GM12878 (cell line): ENCODE measurements at regions of chr1 and their contacts with region 1.

Region 1: DNA sequence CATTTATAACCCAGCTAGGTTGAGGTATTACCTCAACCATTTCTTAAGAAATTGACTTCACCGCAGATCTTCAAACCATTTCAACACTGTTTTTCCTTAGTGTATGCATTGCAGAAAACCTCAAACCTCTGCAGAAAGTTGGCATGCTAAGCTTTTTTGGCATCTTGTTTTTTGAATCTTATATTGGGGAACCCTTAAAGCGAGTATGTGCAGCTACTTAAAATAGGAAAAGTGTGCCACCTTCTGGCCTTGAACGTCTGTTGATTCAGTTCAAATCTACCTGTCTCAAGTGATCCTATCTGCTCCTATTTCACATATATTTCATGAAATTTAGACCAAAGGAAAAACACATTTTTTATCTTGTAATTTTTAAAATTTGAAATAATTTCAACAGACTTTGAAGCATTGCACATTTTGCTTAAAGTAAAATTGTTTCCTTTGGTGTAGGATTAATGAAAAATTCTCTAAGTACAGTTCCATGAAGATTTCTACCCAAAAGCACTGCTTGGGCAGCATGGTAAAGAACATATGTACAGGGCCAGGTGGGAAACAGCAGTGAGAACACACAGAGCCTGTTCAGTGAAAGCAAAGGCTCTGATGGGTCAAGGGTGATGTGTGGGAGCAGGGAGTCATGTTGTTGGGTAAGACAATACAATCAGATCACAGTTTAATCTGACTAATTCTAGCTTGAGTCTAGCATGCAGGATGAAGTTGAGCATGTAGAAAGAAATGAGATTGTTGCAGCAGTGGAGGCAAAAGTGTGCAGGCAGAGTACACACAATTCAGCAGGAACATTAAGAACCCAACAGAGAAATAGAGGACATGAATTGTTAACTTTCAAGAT is 17.2 kb downstream of the HENMT1 start:
- DNase-seq: peak; percentile 16
- ATAC-seq: peak; percentile 86
- H3K4me3 ChIP-seq: no peak overlapping the region
- H3K27ac ChIP-seq: no peak overlapping the region
- H3K4me1 ChIP-seq: peaks cover 3% of the 10 kb centered on the region; the same call in 1 of the 2 replicates
- H3K27me3 ChIP-seq: no peaks in the 10 kb centered on the region
- CTCF ChIP-seq: peak; percentile 36 to 69 (median 47); a peak in 5 of 6 replicates
- EP300 ChIP-seq: no peak
- POLR2A ChIP-seq: no peak
- RAD21 ChIP-seq: peak; percentile 71

Region 2: GRCh38 chr1:107702946-107703577 is 940.7 kb before region 1 on chr1:
- CTCF ChIA-PET with region 1: no interaction called
- POLR2A ChIA-PET with region 1: no interaction called
- RAD21 ChIA-PET with region 1: no interaction called
- SMC1A ChIA-PET with region 1: no interaction called
- in situ Hi-C with region 1: no loop called
- intact Hi-C with region 1: no loop called
- DNase-seq: no peak
- ATAC-seq: no peak
- H3K4me3 ChIP-seq: no peak overlapping the region
- H3K27ac ChIP-seq: no peak overlapping the region
- H3K4me1 ChIP-seq: no peaks in the 10 kb centered on the region
- H3K27me3 ChIP-seq: no peaks in the 10 kb centered on the region
- CTCF ChIP-seq: no peak
- EP300 ChIP-seq: no peak
- POLR2A ChIP-seq: no peak
- RAD21 ChIP-seq: no peak

Region 3: DNA sequence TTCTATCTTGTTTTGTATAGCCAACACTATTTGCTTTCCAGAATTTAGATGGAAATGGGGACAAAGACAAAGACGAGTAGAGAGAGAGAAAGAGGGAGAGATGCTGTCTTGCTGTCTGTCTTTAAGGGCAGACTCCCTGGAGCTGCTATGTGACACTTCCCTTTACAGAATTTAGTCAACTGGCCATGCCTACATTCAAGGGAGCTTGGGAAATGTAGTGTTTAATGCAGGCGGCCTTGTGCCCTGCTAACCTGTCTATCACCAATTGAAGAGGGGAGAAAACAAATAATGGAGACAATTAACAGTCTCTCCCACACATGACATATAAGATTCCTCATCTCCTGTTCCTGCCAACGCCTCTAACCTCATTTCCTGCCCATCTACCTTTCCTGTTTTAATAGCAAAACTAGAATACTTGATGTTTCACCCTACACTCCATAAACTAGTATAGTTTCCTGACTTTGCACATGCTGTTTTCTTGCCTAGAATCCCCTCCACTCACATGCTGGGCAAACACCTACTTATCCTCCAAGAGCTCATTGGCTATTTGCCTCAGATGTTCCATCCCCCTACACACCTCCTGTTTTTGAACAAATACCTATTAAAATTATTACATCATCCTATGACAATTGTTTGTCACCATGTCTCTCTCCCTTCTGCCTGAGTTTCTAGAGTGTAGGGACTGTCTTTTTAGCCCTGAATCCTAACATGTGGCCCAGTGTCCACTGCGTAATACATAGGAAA is 560.8 kb before region 1 on chr1:
- CTCF ChIA-PET with region 1: no interaction called
- POLR2A ChIA-PET with region 1: no interaction called
- RAD21 ChIA-PET with region 1: no interaction called
- SMC1A ChIA-PET with region 1: no interaction called
- in situ Hi-C with region 1: no loop called
- intact Hi-C with region 1: no loop called
- DNase-seq: no peak
- ATAC-seq: peak; percentile 72
- H3K4me3 ChIP-seq: no peak overlapping the region
- H3K27ac ChIP-seq: no peak overlapping the region
- H3K4me1 ChIP-seq: no peaks in the 10 kb centered on the region; the same call in 1 of the 2 replicates
- H3K27me3 ChIP-seq: peaks cover 0 to 2% of the 10 kb centered on the region in 2 experiments; a peak in 1 of 4 replicates
- CTCF ChIP-seq: no peak
- EP300 ChIP-seq: no peak
- POLR2A ChIP-seq: no peak
- RAD21 ChIP-seq: no peak

Region 4: GRCh38 chr1:108503076-108503740 is 140.5 kb before region 1 on chr1:
- CTCF ChIA-PET with region 1: interaction called, 4 read pairs
- POLR2A ChIA-PET with region 1: no interaction called
- RAD21 ChIA-PET with region 1: interaction called, 3 read pairs
- SMC1A ChIA-PET with region 1: interaction called, 3 read pairs
- in situ Hi-C with region 1: loop called (anchors 5 kb)
- intact Hi-C with region 1: no loop called
- DNase-seq: no peak
- ATAC-seq: no peak
- H3K4me3 ChIP-seq: no peak overlapping the region
- H3K27ac ChIP-seq: no peak overlapping the region
- H3K4me1 ChIP-seq: 0 out of 2 replicates have a peak, but pooled peaks cover 3% of the 10 kb centered on the region
- H3K27me3 ChIP-seq: 0 out of 4 replicates have a peak, but pooled peaks cover 0 to 3% of the 10 kb centered on the region in 2 experiments
- CTCF ChIP-seq: no peak
- EP300 ChIP-seq: no peak
- POLR2A ChIP-seq: no peak
- RAD21 ChIP-seq: no peak

Region 5: DNA sequence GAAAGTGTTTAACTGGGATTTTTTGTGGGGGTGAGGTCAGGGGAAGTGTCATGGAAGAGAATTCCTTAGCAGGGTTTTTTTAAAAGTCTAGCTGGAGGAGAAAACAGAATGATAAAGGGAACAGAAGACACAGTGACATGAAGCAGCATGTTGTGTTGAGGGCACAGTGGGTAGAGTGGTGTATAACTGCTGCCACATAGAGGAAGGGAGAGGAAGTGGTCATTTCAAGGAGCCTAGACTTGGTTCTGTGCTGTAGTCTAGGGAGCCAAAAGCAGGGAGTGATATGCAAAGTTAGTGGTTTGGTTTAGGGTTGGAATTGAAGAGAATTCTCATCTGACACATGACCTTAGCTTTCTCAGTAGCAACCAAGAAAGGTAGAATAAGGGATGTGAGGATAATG is 73.6 kb before region 1 on chr1:
- CTCF ChIA-PET with region 1: interaction called, 4 read pairs
- POLR2A ChIA-PET with region 1: no interaction called
- RAD21 ChIA-PET with region 1: interaction called, 3 read pairs
- SMC1A ChIA-PET with region 1: interaction called, 8 read pairs
- in situ Hi-C with region 1: loop called (anchors 5 kb)
- intact Hi-C with region 1: no loop called
- DNase-seq: no peak
- ATAC-seq: peak; percentile 99
- H3K4me3 ChIP-seq: no peak overlapping the region
- H3K27ac ChIP-seq: no peak overlapping the region
- H3K4me1 ChIP-seq: peaks cover 3% of the 10 kb centered on the region; the same call in 1 of the 2 replicates
- H3K27me3 ChIP-seq: no peaks in the 10 kb centered on the region
- CTCF ChIP-seq: peak; percentile 68 to 73 (median 68)
- EP300 ChIP-seq: no peak
- POLR2A ChIP-seq: no peak
- RAD21 ChIP-seq: peak; percentile 63

Region 6: DNA sequence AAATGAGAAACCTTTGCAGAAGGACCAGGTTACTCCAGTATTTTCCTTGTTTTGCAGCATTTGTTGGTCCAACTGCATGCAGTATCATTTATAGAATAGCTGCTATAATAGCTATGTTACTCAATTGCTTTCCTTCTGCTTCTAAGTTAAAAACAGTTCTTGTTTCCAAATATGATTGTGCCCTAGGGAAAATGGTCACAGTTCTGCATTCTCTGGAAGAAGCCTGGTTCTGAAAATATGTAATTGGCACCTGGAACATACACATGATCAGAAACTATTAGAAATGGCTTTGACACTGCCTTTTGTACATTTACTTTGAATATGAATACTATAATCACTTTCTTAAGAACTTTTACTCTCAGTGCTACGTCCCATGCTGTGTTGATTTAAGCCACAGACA is 16.5 kb before region 1 on chr1:
- CTCF ChIA-PET with region 1: interaction called, 11 read pairs
- POLR2A ChIA-PET with region 1: no interaction called
- RAD21 ChIA-PET with region 1: no interaction called
- SMC1A ChIA-PET with region 1: interaction called, 7 read pairs
- in situ Hi-C with region 1: no loop called
- intact Hi-C with region 1: no loop called
- DNase-seq: no peak
- ATAC-seq: no peak
- H3K4me3 ChIP-seq: no peak overlapping the region
- H3K27ac ChIP-seq: no peak overlapping the region
- H3K4me1 ChIP-seq: no peaks in the 10 kb centered on the region
- H3K27me3 ChIP-seq: no peaks in the 10 kb centered on the region
- CTCF ChIP-seq: no peak
- EP300 ChIP-seq: no peak
- POLR2A ChIP-seq: no peak
- RAD21 ChIP-seq: no peak

Region 7: DNA sequence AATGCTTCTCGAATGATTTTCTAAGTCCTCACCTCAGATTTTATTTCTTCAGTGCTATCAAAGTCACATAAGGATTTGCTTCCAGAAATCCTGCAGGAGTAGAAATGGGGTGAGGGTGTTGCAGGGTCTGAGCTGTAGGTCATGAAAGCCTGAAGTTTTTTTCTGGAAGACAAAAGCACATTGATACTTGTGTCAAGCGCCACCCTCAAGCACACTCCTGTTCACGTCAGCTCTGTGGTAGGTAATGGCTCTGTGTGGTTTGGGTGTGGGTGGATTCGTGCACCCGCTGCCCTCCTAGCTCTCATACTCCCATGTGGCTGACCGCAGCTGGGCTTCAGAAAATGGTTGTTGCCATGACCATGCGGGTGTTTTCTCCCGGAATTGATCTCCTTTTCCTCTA is 173.3 kb after region 1 on chr1:
- CTCF ChIA-PET with region 1: no interaction called
- POLR2A ChIA-PET with region 1: no interaction called
- RAD21 ChIA-PET with region 1: no interaction called
- SMC1A ChIA-PET with region 1: no interaction called
- in situ Hi-C with region 1: no loop called
- intact Hi-C with region 1: no loop called
- DNase-seq: no peak
- ATAC-seq: peak; percentile 46
- H3K4me3 ChIP-seq: no peak overlapping the region
- H3K27ac ChIP-seq: no peak overlapping the region
- H3K4me1 ChIP-seq: no peaks in the 10 kb centered on the region
- H3K27me3 ChIP-seq: no peaks in the 10 kb centered on the region
- CTCF ChIP-seq: no peak
- EP300 ChIP-seq: no peak
- POLR2A ChIP-seq: no peak
- RAD21 ChIP-seq: no peak

Region 8: DNA sequence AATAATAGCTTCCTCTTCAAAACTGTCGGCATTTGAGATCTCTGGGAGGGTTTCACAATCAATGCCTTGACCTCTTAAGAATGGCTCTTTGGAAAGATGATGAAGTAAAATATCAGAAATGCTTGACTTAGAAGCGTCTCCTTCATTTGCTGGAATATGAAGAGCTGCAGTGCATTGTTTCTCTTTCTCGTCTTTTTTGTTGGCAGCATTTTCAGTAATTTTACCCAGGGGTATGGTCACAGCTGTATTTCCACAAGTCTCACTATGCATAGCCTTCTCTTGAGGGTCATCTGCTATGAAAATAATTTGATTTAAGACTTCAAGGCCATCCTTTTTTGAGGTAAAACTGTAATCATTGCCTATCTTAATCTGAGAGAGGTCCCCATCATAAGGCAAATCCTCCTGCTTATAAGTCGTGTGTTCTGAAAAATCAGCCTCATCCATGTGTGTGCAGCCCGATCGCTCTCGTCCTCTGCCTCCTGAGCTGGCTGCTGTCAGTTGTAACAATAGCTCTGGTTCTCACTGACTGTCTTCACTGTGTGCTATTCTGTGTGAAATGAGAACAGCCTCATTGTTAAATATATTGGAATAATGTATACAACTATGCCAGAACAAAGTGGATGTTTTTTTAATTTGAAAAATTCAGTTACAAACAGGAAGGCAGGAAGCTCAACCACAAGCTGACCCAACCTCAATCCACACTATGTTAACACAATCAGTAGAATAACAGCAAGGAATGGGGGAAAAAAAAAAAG is 208.7 kb after region 1 on chr1:
- CTCF ChIA-PET with region 1: no interaction called
- POLR2A ChIA-PET with region 1: no interaction called
- RAD21 ChIA-PET with region 1: no interaction called
- SMC1A ChIA-PET with region 1: no interaction called
- in situ Hi-C with region 1: no loop called
- intact Hi-C with region 1: no loop called
- DNase-seq: no peak
- ATAC-seq: no peak
- H3K4me3 ChIP-seq: no peak overlapping the region
- H3K27ac ChIP-seq: no peak overlapping the region
- H3K4me1 ChIP-seq: no peaks in the 10 kb centered on the region
- H3K27me3 ChIP-seq: no peaks in the 10 kb centered on the region; a peak in 2 of 4 replicates
- CTCF ChIP-seq: no peak
- EP300 ChIP-seq: no peak
- POLR2A ChIP-seq: no peak
- RAD21 ChIP-seq: no peak

Region 9: DNA sequence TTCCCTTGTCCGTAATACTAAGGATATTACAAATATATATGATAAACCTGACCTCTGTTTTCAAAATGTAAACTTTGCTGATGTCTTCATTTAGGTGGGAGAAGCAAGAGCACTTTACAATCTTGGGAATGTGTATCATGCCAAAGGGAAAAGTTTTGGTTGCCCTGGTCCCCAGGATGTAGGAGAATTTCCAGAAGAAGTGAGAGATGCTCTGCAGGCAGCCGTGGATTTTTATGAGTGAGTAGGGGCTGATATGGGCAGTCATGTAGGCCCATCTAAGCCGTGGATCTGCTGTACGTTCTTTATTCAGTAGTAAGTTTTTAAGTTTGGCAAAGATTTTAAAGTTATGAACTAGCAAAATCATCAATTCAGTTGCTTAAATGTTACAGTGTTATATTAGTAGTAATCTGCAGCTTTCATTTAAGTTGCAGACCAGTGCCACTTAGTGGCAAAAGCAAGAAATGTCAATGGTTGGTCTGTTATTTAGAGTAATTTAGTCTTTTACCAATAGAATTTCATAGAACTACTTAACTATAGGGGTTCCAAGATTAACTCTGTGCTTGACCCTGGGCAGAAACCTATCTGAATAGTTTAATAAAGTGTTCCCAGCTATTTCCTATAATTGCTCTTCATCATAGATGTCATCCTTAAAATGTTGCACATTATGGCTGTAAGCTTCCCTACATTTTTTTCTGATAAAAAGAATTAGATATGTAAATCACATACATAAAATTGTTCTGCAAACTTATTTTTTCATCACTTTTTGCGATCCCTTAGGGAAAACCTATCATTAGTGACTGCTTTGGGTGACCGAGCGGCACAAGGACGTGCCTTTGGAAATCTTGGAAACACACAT is 254.4 kb after region 1 on chr1:
- CTCF ChIA-PET with region 1: interaction called, 10 read pairs
- POLR2A ChIA-PET with region 1: no interaction called
- RAD21 ChIA-PET with region 1: no interaction called
- SMC1A ChIA-PET with region 1: no interaction called
- in situ Hi-C with region 1: no loop called
- intact Hi-C with region 1: no loop called
- DNase-seq: no peak
- ATAC-seq: peak; percentile 82
- H3K4me3 ChIP-seq: no peak overlapping the region
- H3K27ac ChIP-seq: no peak overlapping the region
- H3K4me1 ChIP-seq: no peaks in the 10 kb centered on the region
- H3K27me3 ChIP-seq: no peaks in the 10 kb centered on the region
- CTCF ChIP-seq: peak; percentile 55 to 80 (median 64)
- EP300 ChIP-seq: no peak
- POLR2A ChIP-seq: no peak
- RAD21 ChIP-seq: peak; percentile 86